ENCODE measurements at regions of chr5 and their contacts with region 1.

Region 1: GRCh38 chr5:142446131-142446959 is 121.5 kb upstream of the SPRY4 start:
- DNase-seq: peak; percentile 32 to 90
- H3K4me3 ChIP-seq: peak overlapping the region; percentile 33; the same call in 1 of the 2 replicates
- H3K27ac ChIP-seq: peak overlapping the region; percentile 99
- H3K4me1 ChIP-seq: peaks cover 57% of the 10 kb centered on the region
- H3K27me3 ChIP-seq: no peaks in the 10 kb centered on the region
- CTCF ChIP-seq: no peak

Region 2: GRCh38 chr5:142432369-142432863 is 13.9 kb before region 1 on chr5:
- CTCF ChIA-PET with region 1: interaction called, 13 read pairs
- POLR2A ChIA-PET with region 1: no interaction called
- intact Hi-C with region 1: loop called (anchors 1 kb)
- DNase-seq: no peak
- H3K4me3 ChIP-seq: no peak overlapping the region
- H3K27ac ChIP-seq: no peak overlapping the region
- H3K4me1 ChIP-seq: no peaks in the 10 kb centered on the region
- H3K27me3 ChIP-seq: no peaks in the 10 kb centered on the region
- CTCF ChIP-seq: no peak

Region 3: GRCh38 chr5:142520886-142521285 is 74.5 kb after region 1 on chr5:
- CTCF ChIA-PET with region 1: no interaction called
- POLR2A ChIA-PET with region 1: no interaction called
- intact Hi-C with region 1: no loop called
- DNase-seq: no peak
- H3K4me3 ChIP-seq: no peak overlapping the region
- H3K27ac ChIP-seq: peak overlapping the region; percentile 22; the same call in 1 of the 2 replicates
- H3K4me1 ChIP-seq: peaks cover 12% of the 10 kb centered on the region
- H3K27me3 ChIP-seq: no peaks in the 10 kb centered on the region
- CTCF ChIP-seq: no peak

Region 4: DNA sequence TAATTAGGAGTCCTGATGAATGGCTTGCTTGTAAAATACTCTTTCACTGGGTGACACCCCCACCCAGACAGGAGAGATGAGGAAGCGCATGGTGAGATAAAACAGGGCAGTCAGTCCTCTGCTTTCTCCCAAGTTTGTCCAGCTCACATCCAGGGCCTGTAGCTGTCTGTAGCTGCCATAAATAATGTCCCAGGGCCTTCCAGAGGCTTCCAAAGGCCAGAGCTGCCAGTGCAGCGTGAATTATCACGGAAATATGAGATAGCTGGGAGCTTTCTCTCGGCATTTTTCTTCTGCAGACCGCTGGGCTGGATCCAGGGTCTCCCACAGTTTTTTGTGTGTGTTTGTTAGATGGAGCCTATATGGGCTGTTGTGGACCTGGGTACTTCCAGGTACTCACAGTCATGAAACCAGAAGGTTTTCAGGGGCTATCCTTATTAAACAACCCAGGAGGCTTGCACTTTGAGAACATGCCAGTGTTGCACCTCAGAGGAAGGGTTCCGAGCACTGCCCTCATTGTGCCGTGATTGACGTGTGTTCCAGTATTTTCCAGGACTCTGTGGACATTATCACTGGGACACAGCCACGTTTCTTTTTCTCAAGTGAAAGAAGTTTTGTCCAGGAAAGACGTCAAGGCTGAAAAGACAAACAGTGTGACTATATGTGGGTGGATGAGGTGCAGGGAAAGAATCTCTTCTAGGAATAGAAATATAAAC is 122.1 kb after region 1 on chr5:
- CTCF ChIA-PET with region 1: no interaction called
- POLR2A ChIA-PET with region 1: no interaction called
- intact Hi-C with region 1: no loop called
- DNase-seq: no peak
- H3K4me3 ChIP-seq: no peak overlapping the region
- H3K27ac ChIP-seq: no peak overlapping the region
- H3K4me1 ChIP-seq: no peaks in the 10 kb centered on the region
- H3K27me3 ChIP-seq: no peaks in the 10 kb centered on the region
- CTCF ChIP-seq: no peak